ENCODE measurements at regions of chr14 and their contacts with region 1.

Region 1: GRCh38 chr14:67704484-67705089 is 2.9 kb downstream of the RDH12 start:
- DNase-seq: peak; percentile 53
- ATAC-seq: peak; percentile 82
- H3K4me3 Mint-ChIP-seq: no peak overlapping the region
- H3K27ac Mint-ChIP-seq: no peak overlapping the region
- H3K4me1 Mint-ChIP-seq: peaks cover 3% of the 10 kb centered on the region
- H3K27me3 Mint-ChIP-seq: peaks cover 5% of the 10 kb centered on the region

Region 2: DNA sequence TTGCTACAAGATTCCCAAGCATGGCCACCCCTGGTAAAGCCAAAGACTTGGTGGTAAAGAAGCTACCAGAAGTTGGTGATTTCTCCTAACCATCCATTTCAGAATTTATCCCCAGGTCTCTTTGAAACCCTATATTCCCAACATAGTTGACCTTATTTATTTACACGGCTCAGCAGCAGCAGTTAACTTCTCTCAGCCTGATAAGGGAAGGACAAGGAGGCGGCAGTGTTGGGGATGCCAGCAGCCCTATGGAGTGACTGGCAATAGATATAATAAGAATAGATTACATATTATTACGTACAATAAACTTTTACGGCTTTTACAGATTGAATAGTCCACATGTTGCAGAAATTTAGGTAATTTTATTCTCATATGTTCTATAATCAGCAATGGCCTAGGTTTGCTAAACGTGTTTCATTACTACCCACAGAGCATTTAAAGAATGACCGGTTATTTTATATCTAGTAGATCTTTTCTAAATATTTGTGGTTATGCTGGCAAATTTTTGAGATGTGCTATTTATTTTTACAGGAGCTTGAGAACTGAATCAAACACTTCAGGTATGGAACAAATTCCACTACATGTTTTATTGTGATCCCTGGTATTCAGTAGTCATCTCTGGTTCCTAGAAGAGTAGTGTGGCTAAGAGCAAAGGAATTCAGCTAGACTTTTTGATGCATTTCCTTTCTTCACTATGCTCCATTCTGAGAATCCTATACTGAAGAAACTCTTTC is 483.2 kb before region 1 on chr14:
- CTCF ChIA-PET with region 1: no interaction called
- POLR2A ChIA-PET with region 1: no interaction called
- DNase-seq: no peak
- ATAC-seq: no peak
- H3K4me3 Mint-ChIP-seq: no peak overlapping the region
- H3K27ac Mint-ChIP-seq: no peak overlapping the region
- H3K4me1 Mint-ChIP-seq: no peaks in the 10 kb centered on the region
- H3K27me3 Mint-ChIP-seq: peaks cover 6% of the 10 kb centered on the region

Region 3: DNA sequence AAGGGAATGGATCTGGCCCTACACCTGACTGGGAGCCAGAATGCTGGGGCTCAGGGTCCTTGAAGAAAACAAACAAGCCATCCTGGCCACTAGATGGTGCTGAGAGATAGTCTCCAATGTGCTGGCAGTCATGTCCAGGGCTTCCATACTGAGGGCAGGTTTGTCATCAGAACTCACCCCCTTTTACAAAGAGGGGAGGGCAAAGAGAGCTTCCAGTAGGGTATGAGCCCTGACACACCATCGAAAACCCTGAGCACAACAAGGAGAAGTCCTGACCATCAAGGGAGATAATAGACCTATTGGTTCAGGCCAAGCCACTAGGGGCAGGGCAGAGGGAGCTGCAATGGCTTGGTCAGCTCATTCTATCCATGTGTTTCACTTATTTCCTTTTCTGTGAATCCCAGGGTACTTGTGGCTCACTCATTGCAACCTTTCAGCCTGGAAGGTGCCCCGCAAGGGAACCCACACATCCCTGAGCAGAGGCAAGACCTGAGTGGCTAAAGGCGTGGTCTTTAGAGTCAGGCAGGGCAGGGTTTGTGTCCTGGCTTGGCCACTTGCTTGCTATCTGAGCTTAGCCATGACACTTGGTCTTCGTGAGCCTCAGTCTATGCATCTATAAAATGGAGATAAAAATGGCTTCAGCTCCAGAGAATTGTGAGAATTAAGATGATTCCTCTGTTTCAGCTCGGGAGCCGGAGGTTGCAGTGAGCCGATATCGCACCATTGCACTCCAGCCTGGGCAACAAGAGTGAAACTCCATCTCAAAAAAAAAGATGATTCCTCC is 177.7 kb before region 1 on chr14:
- CTCF ChIA-PET with region 1: interaction called, 30 read pairs
- POLR2A ChIA-PET with region 1: no interaction called
- DNase-seq: peak; percentile 60
- ATAC-seq: peak; percentile 83
- H3K4me3 Mint-ChIP-seq: no peak overlapping the region
- H3K27ac Mint-ChIP-seq: no peak overlapping the region
- H3K4me1 Mint-ChIP-seq: no peaks in the 10 kb centered on the region
- H3K27me3 Mint-ChIP-seq: peaks cover 56% of the 10 kb centered on the region

Region 4: DNA sequence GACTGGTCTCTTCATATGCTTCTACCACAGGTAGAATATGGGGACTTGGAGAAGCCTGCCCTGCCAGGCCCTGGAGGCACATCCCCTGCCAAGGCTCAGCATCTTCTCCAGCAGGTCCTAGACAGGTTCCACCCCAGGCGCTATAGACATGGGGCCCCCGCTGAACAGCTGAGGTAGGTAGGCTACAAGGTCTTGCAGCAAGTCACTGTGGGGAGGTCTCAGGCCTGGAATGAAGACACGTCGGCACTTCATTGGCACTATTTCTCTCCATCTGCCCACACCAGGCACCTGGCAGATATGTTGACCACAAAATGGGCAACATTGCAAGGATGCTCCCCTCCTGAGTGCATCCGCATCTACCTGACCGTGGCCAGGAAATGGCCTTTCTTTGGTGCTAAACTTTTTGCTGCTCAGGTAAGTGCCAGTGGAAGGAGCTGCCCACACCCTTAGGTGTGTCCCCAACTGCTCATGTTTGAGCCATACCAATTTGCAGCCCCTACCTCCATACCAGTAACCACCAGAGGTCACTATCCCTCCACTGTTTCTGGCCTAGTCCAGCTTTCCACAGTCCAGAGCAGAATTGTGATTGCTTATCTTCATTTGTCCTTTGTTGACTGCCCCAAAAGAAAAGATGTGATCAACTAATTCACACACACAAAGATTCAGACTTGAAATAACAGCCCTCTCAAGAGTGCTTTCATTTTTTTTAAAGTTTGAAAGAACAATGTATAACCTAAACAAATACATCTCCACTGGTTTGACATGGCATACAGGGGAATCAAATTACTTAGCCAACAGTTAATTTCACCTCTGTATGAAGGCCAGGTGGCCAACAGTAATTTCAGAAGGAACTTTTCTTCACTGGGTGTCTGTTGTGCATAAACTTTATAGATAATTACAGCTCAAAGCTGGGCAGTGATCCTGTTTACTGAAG is 120.6 kb before region 1 on chr14:
- CTCF ChIA-PET with region 1: interaction called, 90 read pairs
- POLR2A ChIA-PET with region 1: no interaction called
- DNase-seq: peak; percentile 42
- ATAC-seq: peak; percentile 74
- H3K4me3 Mint-ChIP-seq: no peak overlapping the region
- H3K27ac Mint-ChIP-seq: no peak overlapping the region
- H3K4me1 Mint-ChIP-seq: peaks cover 6% of the 10 kb centered on the region
- H3K27me3 Mint-ChIP-seq: no peaks in the 10 kb centered on the region

Region 5: DNA sequence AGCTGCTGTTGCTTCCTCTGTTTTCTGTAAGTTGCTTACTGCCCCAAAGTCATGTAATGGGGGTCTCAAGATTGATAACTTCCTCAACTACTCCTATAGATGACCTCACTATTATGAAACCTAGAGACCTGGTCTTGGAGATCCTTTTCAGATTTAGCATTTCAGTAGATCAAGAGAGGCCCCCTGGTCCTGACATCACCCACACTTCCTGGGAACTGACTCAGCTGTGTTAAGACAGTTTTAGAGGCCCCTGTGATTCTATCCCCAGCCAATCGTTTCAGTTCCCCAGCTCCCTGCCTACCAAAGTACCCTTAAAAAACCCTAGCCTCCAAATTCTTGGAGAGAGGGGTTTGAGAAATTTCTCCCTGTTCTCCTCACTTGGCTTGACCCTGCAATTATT is 94.1 kb before region 1 on chr14:
- CTCF ChIA-PET with region 1: interaction called, 50 read pairs
- POLR2A ChIA-PET with region 1: no interaction called
- DNase-seq: no peak
- ATAC-seq: no peak
- H3K4me3 Mint-ChIP-seq: no peak overlapping the region
- H3K27ac Mint-ChIP-seq: no peak overlapping the region
- H3K4me1 Mint-ChIP-seq: no peaks in the 10 kb centered on the region
- H3K27me3 Mint-ChIP-seq: peaks cover 6% of the 10 kb centered on the region

Region 6: DNA sequence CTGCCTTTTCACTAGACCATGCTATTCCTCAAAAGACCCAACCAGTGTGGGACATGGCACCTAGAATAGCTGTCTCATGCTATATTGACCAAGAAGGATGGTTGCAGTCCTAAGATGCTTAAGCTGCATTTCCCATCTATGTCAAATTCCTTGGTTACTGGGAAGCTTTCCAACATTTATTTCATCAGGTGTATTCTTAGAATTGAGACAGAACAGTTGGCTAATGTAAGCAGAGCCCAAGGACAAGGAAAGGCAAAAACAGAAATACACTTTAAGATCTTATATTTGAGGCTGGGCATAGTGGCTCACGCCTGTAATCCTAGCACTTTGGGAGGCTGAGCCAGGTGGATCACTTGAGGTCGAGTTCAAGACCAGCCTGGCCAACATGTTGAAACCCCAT is 60.2 kb before region 1 on chr14:
- CTCF ChIA-PET with region 1: interaction called, 14 read pairs
- POLR2A ChIA-PET with region 1: no interaction called
- DNase-seq: no peak
- ATAC-seq: no peak
- H3K4me3 Mint-ChIP-seq: no peak overlapping the region
- H3K27ac Mint-ChIP-seq: no peak overlapping the region
- H3K4me1 Mint-ChIP-seq: peaks cover 8% of the 10 kb centered on the region
- H3K27me3 Mint-ChIP-seq: no peaks in the 10 kb centered on the region

Region 7: DNA sequence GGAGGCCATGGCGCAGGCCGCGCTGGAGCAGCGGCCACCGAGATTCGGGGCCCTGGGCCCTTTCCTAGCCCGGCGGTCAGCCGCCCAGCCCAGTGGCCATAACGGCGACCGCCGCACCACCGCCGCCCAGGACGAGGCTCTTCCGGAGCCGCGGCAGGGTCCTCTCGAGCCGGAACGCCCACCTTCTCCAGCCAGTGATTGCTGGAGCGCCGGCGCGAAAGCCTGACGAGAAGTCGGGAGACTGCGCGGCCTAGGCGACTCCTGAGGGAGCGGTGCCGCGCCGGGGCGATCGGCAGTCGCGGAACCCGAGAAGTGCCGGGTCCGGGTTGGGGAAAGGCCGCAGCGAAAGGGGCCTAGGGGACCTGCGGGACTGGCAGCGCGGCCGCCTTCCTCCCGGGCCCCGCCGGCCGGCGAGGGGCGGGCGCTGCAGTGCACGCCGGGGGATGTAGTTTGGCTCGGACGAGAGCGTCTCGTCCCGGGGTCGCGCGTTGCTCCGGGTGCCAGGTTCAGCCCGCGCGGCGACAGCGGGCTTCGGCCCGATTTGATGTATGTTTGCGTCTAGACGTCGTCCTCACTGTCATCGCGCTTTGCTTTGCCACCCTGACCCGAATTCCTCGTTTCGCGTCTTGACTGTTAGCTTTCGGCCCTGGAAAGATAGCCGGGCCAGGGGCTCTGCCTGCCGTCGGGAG is 30.0 kb before region 1 on chr14 and contains the start of gene VTI1B:
- CTCF ChIA-PET with region 1: interaction called, 28 read pairs
- POLR2A ChIA-PET with region 1: interaction called, 5 read pairs
- DNase-seq: peak; percentile 76
- ATAC-seq: peak; percentile 94
- H3K4me3 Mint-ChIP-seq: peak within 1 kb of the TSS; percentile 83
- H3K27ac Mint-ChIP-seq: peak within 1 kb of the TSS; percentile 87
- H3K4me1 Mint-ChIP-seq: peaks cover 36% of the 10 kb centered on the region
- H3K27me3 Mint-ChIP-seq: no peaks in the 10 kb centered on the region
- total RNA-seq, gene VTI1B: 69.6 to 70.6 TPM

Region 8: GRCh38 chr14:67717048-67717447 is 12.5 kb after region 1 on chr14:
- CTCF ChIA-PET with region 1: interaction called, 39 read pairs
- POLR2A ChIA-PET with region 1: interaction called, 3 read pairs
- DNase-seq: no peak
- ATAC-seq: no peak
- H3K4me3 Mint-ChIP-seq: no peak overlapping the region
- H3K27ac Mint-ChIP-seq: no peak overlapping the region
- H3K4me1 Mint-ChIP-seq: no peaks in the 10 kb centered on the region
- H3K27me3 Mint-ChIP-seq: peaks cover 16% of the 10 kb centered on the region